Transverse colon (tissue), 4 donors: ENCODE measurements at regions of chr3 and their contacts with region 1.

Region 1: DNA sequence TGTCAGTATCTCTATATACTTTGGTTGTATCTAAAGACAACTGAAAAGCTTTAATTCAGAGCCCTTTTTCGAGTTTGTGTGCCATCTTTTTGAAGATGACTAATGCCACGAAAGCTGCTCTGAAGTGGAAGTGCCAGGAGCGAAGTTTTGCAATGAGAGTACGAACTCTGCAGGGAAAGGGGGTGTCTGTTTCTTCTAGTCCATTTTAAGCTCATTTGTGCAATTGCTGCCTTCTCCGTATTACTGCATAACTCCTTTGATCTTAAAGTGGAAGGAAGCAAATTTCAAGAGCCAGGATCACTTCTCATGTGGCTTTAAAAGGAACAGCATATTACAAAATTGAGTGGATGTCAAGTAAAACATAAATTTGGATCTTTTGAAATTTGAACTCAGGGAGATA is 245.3 kb downstream of the FEZF2 start:
- DNase-seq: no peak
- H3K4me3 ChIP-seq: no peak overlapping the region
- H3K27ac ChIP-seq: no peak overlapping the region
- H3K4me1 ChIP-seq: peaks cover 0 to 5% (median 0%) of the 10 kb centered on the region in 4 donors
- H3K27me3 ChIP-seq: no peaks in the 10 kb centered on the region
- CTCF ChIP-seq: no peak
- EP300 ChIP-seq: no peak
- POLR2A ChIP-seq: no peak

Region 2: GRCh38 chr3:62051507-62051906 is 76.5 kb before region 1 on chr3:
- in situ Hi-C with region 1: no loop called
- intact Hi-C with region 1: loop called (anchors 10 kb)
- DNase-seq: peak; percentile 47
- H3K4me3 ChIP-seq: no peak overlapping the region
- H3K27ac ChIP-seq: no peak overlapping the region
- H3K4me1 ChIP-seq: no peaks in the 10 kb centered on the region
- H3K27me3 ChIP-seq: no peaks in the 10 kb centered on the region
- CTCF ChIP-seq: peak; percentile 12 to 60 (median 38)
- EP300 ChIP-seq: no peak
- POLR2A ChIP-seq: no peak